ENCODE measurements at regions of chr6 and their contacts with region 1.

Region 1: DNA sequence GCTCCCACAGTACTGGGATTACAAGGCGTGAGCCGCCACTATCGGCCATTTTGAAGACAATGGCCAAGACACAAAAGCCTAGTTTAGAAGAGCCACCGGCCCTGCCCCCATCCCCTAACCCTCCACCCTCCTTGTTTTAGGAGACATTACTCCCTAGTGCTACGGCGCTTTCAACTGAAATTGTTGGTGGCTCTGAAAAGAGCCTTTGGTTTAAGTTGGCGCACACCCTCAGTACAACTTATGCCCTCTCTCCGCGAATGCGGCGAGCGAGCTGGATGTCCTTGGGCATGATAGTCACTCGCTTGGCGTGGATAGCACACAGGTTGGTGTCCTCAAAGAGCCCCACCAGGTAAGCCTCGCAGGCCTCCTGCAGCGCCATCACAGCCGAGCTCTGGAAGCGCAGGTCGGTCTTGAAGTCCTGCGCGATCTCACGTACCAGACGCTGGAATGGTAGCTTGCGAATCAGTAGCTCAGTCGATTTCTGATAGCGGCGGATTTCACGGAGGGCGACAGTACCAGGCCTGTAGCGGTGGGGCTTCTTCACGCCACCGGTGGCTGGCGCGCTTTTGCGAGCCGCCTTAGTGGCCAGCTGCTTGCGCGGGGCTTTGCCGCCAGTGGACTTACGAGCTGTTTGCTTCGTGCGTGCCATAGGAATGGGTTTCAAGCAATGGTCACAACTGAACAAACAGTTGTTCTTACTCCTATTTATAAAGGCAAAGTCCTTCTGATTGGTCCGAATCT is 114.9 kb upstream of the BTN3A2 start:
- DNase-seq: peak; percentile 97
- ATAC-seq: peak; percentile 64
- H3K4me3 ChIP-seq: peak overlapping the region; percentile 76
- H3K27ac ChIP-seq: peak overlapping the region; percentile 91
- H3K4me1 ChIP-seq: no peaks in the 10 kb centered on the region; the same call in 1 of the 2 replicates
- H3K27me3 ChIP-seq: no peaks in the 10 kb centered on the region
- CTCF ChIP-seq: peak; percentile 56 to 67 (median 65)
- EP300 ChIP-seq: no peak
- POLR2A ChIP-seq: peak; percentile 97
- RAD21 ChIP-seq: 0 out of 2 replicates have a peak, but pooled peaks have one; percentile 22

Region 2: GRCh38 chr6:26017632-26017966 is 232.5 kb before region 1 on chr6:
- CTCF ChIA-PET with region 1: no interaction called
- POLR2A ChIA-PET with region 1: no interaction called
- RAD21 ChIA-PET with region 1: no interaction called
- SMC1A ChIA-PET with region 1: no interaction called
- in situ Hi-C with region 1: no loop called
- intact Hi-C with region 1: no loop called
- DNase-seq: no peak
- ATAC-seq: no peak
- H3K4me3 ChIP-seq: no peak overlapping the region
- H3K27ac ChIP-seq: no peak overlapping the region
- H3K4me1 ChIP-seq: peaks cover 4% of the 10 kb centered on the region; the same call in 1 of the 2 replicates
- H3K27me3 ChIP-seq: no peaks in the 10 kb centered on the region
- CTCF ChIP-seq: peak; percentile 19 to 39 (median 30); a peak in 4 of 6 replicates
- EP300 ChIP-seq: no peak
- POLR2A ChIP-seq: peak; percentile 71
- RAD21 ChIP-seq: no peak

Region 3: DNA sequence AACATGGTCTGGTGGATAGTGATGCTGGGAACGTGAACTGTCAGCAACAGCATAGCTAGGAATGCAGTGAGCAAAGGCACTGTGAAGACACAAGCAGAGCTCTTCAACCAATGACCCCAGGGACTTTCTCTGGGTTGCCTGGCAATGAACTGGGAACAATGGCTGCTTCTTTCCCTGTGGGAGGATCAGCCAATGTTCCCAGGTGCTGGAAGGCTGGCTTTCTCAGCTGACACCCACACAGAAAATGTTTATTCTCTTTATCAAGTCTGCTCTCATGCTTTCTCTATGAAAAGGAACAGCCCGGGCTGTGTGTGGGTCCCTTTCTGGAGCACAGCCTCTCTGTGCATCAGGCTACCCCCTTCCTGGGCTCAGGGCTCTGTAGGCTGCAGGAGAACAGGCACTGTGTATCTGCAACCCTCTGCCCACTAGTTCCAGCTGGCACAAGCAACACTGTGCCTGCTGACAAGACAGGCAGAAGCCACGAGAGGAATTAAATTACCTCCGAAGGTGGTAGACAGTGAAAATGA is 108.7 kb before region 1 on chr6:
- CTCF ChIA-PET with region 1: no interaction called
- POLR2A ChIA-PET with region 1: no interaction called
- RAD21 ChIA-PET with region 1: no interaction called
- SMC1A ChIA-PET with region 1: no interaction called
- in situ Hi-C with region 1: no loop called
- intact Hi-C with region 1: no loop called
- DNase-seq: no peak
- ATAC-seq: no peak
- H3K4me3 ChIP-seq: no peak overlapping the region
- H3K27ac ChIP-seq: no peak overlapping the region
- H3K4me1 ChIP-seq: no peaks in the 10 kb centered on the region; the same call in 1 of the 2 replicates
- H3K27me3 ChIP-seq: no peaks in the 10 kb centered on the region
- CTCF ChIP-seq: no peak
- EP300 ChIP-seq: no peak
- POLR2A ChIP-seq: no peak
- RAD21 ChIP-seq: no peak

Region 4: GRCh38 chr6:26204332-26205165 is 45.6 kb before region 1 on chr6:
- CTCF ChIA-PET with region 1: interaction called, 9 read pairs
- POLR2A ChIA-PET with region 1: interaction called, 16 read pairs
- RAD21 ChIA-PET with region 1: interaction called, 23 read pairs
- SMC1A ChIA-PET with region 1: interaction called, 12 read pairs
- in situ Hi-C with region 1: no loop called
- intact Hi-C with region 1: no loop called
- DNase-seq: peak; percentile 97
- ATAC-seq: peak; percentile 76
- H3K4me3 ChIP-seq: peak overlapping the region; percentile 72
- H3K27ac ChIP-seq: peak overlapping the region; percentile 96
- H3K4me1 ChIP-seq: peaks cover 14% of the 10 kb centered on the region
- H3K27me3 ChIP-seq: no peaks in the 10 kb centered on the region
- CTCF ChIP-seq: peak; percentile 23 to 49 (median 25); a peak in 4 of 6 replicates
- EP300 ChIP-seq: peak; percentile 68 to 86; a peak in 3 of 4 replicates
- POLR2A ChIP-seq: peak; percentile 91
- RAD21 ChIP-seq: 0 out of 2 replicates have a peak, but pooled peaks have one; percentile 5

Region 5: GRCh38 chr6:26223650-26224546 is 26.2 kb before region 1 on chr6:
- CTCF ChIA-PET with region 1: interaction called, 5 read pairs
- POLR2A ChIA-PET with region 1: interaction called, 18 read pairs
- RAD21 ChIA-PET with region 1: interaction called, 14 read pairs
- SMC1A ChIA-PET with region 1: interaction called, 4 read pairs
- in situ Hi-C with region 1: no loop called
- intact Hi-C with region 1: no loop called
- DNase-seq: peak; percentile 78
- ATAC-seq: peak; percentile 85
- H3K4me3 ChIP-seq: peak overlapping the region; percentile 79
- H3K27ac ChIP-seq: peak overlapping the region; percentile 96
- H3K4me1 ChIP-seq: peaks cover 21% of the 10 kb centered on the region
- H3K27me3 ChIP-seq: no peaks in the 10 kb centered on the region
- CTCF ChIP-seq: no peak
- EP300 ChIP-seq: no peak
- POLR2A ChIP-seq: no peak
- RAD21 ChIP-seq: no peak

Region 6: DNA sequence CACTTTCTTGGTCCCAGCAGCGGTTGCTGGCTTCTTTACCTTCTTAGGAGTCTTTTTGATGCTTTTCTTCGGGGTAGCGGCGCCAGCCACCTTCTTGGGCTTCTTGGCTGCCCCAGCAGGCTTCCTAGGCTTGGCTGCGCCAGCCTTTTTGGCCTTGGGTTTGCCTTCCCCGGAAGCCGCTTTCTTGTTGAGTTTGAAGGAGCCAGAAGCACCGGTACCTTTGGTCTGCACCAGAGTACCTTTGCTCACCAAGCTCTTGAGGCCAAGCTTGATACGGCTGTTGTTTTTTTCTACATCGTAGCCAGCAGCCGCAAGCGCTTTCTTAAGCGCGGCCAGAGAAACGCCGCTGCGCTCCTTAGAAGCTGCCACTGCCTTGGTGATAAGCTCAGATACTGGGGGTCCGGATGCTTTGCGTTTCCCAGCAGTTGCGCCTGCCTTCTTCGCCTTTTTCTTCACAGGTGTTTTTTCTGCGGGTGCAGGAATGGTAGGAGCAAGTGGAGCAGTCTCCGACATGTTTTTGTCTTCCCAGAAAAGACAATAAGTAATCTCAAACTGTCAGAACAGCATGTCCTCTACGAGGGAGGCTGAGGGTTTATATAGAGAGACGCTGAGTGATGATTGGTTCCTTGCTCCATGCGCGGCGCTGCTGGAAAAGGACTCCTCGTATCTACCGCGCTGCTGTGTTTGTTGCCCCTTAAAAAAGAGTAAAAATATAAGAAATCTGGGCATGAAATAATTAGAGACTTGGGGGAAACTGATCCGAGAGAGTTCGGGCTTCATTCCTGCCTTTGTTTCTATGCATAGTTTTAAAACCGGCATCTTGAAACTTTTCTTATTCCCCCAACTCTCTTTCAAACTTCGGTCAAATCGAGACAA is 15.5 kb before region 1 on chr6:
- CTCF ChIA-PET with region 1: interaction called, 46 read pairs
- POLR2A ChIA-PET with region 1: interaction called, 50 read pairs
- RAD21 ChIA-PET with region 1: interaction called, 50 read pairs
- SMC1A ChIA-PET with region 1: interaction called, 5 read pairs
- in situ Hi-C with region 1: no loop called
- intact Hi-C with region 1: no loop called
- DNase-seq: peak; percentile 96
- ATAC-seq: peak; percentile 62
- H3K4me3 ChIP-seq: peak overlapping the region; percentile 83
- H3K27ac ChIP-seq: peak overlapping the region; percentile 95
- H3K4me1 ChIP-seq: peaks cover 2% of the 10 kb centered on the region
- H3K27me3 ChIP-seq: no peaks in the 10 kb centered on the region
- CTCF ChIP-seq: no peak; a peak in 1 of 6 replicates
- EP300 ChIP-seq: peak in 1 of 2 experiments; percentile 64; a peak in 2 of 4 replicates
- POLR2A ChIP-seq: peak; percentile 92
- RAD21 ChIP-seq: 0 out of 2 replicates have a peak, but pooled peaks have one; percentile 13

Region 7: DNA sequence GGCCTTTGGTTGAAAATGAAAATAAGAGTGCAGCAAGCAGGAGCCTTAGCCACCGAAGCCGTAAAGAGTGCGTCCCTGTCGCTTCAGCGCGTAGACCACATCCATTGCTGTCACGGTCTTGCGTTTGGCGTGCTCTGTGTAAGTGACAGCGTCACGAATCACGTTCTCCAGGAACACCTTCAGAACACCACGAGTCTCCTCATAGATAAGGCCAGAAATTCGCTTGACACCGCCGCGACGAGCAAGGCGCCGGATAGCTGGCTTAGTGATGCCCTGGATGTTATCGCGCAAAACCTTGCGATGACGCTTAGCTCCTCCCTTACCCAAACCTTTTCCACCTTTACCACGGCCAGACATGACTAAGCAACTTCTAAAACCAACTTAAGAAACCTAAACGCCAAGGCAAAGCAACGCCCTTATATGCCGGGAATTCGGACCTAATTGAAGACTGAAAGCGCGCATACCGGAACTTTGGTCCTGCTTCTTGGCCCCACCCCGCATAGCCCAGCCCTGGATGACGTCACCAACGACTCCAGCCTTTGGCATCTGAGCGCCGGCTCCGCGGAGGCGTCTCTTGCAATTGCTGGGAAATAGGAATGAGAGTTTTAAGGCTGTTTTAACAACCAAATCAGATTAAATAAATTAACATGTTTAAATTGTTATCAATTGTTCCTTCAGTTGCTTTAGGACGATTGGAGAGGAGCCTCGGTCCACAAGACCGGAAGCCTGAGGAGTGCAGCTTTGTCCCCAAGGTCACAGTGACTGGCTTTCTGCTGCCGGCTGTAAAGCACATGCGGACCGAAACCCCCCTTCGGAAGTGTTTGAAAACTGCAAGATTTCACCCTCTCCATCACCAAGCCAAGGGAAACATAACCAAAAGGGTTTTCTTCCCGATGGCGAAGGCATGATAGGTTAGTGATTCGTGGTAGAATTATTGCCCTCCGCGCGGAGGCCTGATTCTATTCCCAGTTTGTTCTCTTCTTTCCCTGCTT is 35.3 kb after region 1 on chr6:
- CTCF ChIA-PET with region 1: interaction called, 5 read pairs
- POLR2A ChIA-PET with region 1: interaction called, 4 read pairs
- RAD21 ChIA-PET with region 1: interaction called, 5 read pairs
- SMC1A ChIA-PET with region 1: interaction called, 13 read pairs
- in situ Hi-C with region 1: no loop called
- intact Hi-C with region 1: no loop called
- DNase-seq: peak; percentile 100
- ATAC-seq: peak; percentile 84
- H3K4me3 ChIP-seq: peak overlapping the region; percentile 75
- H3K27ac ChIP-seq: peak overlapping the region; percentile 97
- H3K4me1 ChIP-seq: no peaks in the 10 kb centered on the region; the same call in 1 of the 2 replicates
- H3K27me3 ChIP-seq: no peaks in the 10 kb centered on the region
- CTCF ChIP-seq: no peak
- EP300 ChIP-seq: peak in 1 of 2 experiments; percentile 72; a peak in 3 of 4 replicates
- POLR2A ChIP-seq: peak; percentile 95
- RAD21 ChIP-seq: no peak

Region 8: DNA sequence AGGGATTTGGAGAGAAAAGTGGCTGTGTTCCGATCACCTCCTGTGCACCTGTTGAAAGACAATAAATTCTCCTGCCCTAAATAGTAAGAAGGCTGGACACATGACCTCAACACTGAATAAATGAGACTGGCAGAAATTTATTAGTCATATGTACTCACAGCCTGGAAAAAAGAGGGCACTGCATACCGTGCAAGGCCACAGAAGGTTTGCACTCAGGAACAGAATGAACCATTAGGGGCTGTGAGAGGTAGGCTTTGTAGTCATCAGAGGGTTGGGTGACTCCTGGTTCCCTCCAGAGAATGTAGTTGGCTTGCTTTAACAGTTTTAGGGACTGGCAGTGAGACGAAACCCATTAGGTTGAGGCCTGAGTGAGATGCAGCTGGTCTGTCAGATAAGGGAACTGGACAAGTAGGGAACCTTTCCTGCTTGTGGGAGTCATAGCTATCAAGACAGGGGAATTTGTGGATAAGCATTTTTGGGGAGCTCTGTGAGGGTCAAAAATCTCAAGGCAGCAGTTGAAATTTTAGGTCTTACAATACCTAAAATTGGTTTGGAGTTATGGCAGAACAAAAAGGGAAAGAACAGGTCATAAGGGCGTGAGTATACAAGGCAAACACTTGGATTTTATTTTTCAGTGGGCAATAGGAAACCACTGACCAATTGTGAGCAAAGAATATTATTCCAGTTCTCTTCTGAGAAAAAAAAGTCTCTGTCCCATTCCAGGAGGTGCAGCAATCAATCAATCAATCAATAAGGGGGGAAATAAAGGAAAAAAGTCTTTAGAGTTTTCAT is 46.9 kb after region 1 on chr6:
- CTCF ChIA-PET with region 1: no interaction called
- POLR2A ChIA-PET with region 1: no interaction called
- RAD21 ChIA-PET with region 1: no interaction called
- SMC1A ChIA-PET with region 1: no interaction called
- in situ Hi-C with region 1: no loop called
- intact Hi-C with region 1: no loop called
- DNase-seq: no peak
- ATAC-seq: peak; percentile 23; the same call in 1 of the 3 replicates
- H3K4me3 ChIP-seq: no peak overlapping the region
- H3K27ac ChIP-seq: no peak overlapping the region
- H3K4me1 ChIP-seq: peaks cover 8% of the 10 kb centered on the region
- H3K27me3 ChIP-seq: no peaks in the 10 kb centered on the region
- CTCF ChIP-seq: no peak
- EP300 ChIP-seq: no peak
- POLR2A ChIP-seq: no peak
- RAD21 ChIP-seq: no peak